ENCODE measurements at regions of chr14 and their contacts with region 1.

Region 1: DNA sequence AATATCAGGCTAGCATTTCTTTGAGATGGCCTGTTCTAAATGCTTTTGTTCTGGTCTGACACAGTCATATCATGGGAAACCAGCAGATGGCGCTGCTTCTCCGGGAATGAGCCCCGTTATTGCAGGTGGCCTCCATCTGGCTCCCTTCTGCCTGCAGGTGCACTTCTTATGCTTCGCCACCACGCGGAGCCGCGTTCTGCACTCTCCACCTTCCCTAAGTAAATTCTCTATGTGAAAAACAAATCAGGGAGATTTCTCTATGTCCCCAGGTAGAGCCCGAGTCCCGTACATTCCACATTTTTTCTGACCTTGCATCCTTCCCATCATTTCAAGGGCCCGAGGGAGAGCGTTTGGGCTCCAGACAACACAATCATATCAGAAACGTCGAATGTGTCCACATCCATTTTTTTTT is 26.2 kb downstream of the GLRX5 start:
- DNase-seq: peak; percentile 88
- ATAC-seq: peak; percentile 97
- H3K4me3 ChIP-seq: no peak overlapping the region
- H3K27ac ChIP-seq: no peak overlapping the region
- H3K4me1 ChIP-seq: no peaks in the 10 kb centered on the region
- H3K27me3 ChIP-seq: no peaks in the 10 kb centered on the region
- CTCF ChIP-seq: peak; percentile 96

Region 2: GRCh38 chr14:95662376-95663186 is 101.6 kb after region 1 on chr14:
- intact Hi-C with region 1: no loop called
- DNase-seq: no peak
- ATAC-seq: no peak
- H3K4me3 ChIP-seq: no peak overlapping the region
- H3K27ac ChIP-seq: no peak overlapping the region
- H3K4me1 ChIP-seq: no peaks in the 10 kb centered on the region
- H3K27me3 ChIP-seq: no peaks in the 10 kb centered on the region
- CTCF ChIP-seq: no peak

Region 3: DNA sequence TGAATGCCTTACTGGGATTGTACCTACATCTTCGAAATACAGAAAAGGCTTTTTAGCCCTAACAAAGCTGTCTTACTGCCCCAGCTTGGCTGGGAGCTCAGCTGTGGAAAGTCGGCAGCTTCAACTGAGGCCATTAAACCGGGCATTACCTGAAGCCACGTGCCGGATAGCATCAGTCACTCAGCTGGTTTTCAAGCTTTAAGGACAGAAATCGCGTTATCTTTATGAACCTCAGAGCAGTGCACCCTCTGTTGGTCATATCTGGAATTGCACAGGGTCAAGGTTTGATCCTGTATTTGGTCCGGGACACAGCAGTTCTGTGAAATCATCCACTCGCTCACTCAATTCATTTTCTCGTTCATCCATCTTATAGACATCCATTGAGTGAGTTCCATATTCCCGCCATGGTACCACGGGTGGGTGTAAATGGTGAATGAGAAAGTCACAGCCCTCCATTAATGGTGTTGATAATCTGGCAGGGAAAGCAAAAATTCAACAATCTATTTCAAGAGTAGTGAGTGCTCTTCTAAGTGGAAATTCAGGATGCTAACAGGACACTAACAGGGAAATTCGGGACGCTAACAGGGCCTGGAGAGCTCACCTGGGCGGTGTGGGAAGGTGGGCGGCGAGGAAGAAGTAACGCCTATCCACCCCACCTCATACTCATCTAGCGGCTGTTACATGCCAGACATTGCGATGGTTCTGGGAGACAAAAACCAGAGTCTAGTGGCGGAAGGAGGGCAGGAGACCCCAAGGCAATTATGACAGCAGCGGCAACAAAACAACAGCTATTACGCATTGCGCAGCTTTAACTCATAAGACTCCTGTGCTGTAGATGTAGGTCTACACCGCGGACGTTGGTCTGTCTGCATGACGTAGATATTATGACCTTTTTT is 213.5 kb after region 1 on chr14:
- intact Hi-C with region 1: loop called (anchors 5 kb)
- DNase-seq: no peak
- ATAC-seq: peak; percentile 75
- H3K4me3 ChIP-seq: no peak overlapping the region
- H3K27ac ChIP-seq: no peak overlapping the region
- H3K4me1 ChIP-seq: no peaks in the 10 kb centered on the region
- H3K27me3 ChIP-seq: no peaks in the 10 kb centered on the region
- CTCF ChIP-seq: peak; percentile 92